Common myeloid progenitor, CD34-positive (primary cell): ENCODE measurements at regions of chr9 and their contacts with region 1.

Region 1: DNA sequence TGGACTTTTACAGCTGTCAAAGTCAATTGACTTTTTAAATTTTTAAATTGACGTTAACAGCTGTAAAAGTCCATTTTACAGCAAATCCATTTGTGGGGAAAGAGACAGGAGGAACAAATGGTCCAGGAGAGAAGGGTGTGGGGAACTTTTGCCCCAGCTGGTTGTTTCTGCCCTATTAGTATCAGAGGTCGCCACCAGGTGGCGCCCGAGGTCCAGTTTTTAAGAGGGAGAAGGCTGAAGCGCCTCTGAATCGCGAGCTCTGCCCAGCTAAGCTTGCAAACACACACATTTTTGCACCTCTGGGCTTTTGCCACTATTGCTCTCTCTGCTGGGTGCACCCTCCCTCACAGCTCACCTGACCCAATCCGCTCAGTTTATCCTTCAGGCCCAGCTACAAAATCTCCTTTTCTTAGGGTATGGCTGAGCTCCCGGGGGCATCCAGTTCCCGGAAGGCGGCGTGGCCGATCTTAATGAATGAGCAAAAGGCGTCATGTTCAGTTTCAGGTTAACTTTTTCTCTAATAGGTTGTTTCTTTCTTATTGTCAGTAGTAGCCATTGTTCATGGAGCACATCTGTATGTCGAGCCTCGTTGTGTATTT is 6.3 kb upstream of the TTLL11 start:
- DNase-seq: peak; percentile 71 to 87 (median 81)
- H3K4me3 ChIP-seq: peak overlapping the region in 2 of 7 experiments; percentile 33 to 35
- H3K27ac ChIP-seq: no peak overlapping the region
- H3K4me1 ChIP-seq: peaks cover 0 to 9% (median 4%) of the 10 kb centered on the region in 4 experiments
- H3K27me3 ChIP-seq: peaks cover 0 to 5% (median 0%) of the 10 kb centered on the region in 5 experiments

Region 2: GRCh38 chr9:121807823-121808278 is 291.5 kb before region 1 on chr9:
- CTCF ChIA-PET with region 1: no interaction called
- POLR2A ChIA-PET with region 1: no interaction called
- DNase-seq: no peak
- H3K4me3 ChIP-seq: no peak overlapping the region
- H3K27ac ChIP-seq: no peak overlapping the region
- H3K4me1 ChIP-seq: no peaks in the 10 kb centered on the region
- H3K27me3 ChIP-seq: peaks cover 0 to under 1% (median 0%) of the 10 kb centered on the region in 5 experiments

Region 3: GRCh38 chr9:122060014-122060413 is 39.4 kb before region 1 on chr9:
- CTCF ChIA-PET with region 1: no interaction called
- POLR2A ChIA-PET with region 1: no interaction called
- DNase-seq: no peak
- H3K4me3 ChIP-seq: no peak overlapping the region
- H3K27ac ChIP-seq: no peak overlapping the region
- H3K4me1 ChIP-seq: peaks cover 0 to 7% (median 6%) of the 10 kb centered on the region in 4 experiments
- H3K27me3 ChIP-seq: no peaks in the 10 kb centered on the region

Region 4: DNA sequence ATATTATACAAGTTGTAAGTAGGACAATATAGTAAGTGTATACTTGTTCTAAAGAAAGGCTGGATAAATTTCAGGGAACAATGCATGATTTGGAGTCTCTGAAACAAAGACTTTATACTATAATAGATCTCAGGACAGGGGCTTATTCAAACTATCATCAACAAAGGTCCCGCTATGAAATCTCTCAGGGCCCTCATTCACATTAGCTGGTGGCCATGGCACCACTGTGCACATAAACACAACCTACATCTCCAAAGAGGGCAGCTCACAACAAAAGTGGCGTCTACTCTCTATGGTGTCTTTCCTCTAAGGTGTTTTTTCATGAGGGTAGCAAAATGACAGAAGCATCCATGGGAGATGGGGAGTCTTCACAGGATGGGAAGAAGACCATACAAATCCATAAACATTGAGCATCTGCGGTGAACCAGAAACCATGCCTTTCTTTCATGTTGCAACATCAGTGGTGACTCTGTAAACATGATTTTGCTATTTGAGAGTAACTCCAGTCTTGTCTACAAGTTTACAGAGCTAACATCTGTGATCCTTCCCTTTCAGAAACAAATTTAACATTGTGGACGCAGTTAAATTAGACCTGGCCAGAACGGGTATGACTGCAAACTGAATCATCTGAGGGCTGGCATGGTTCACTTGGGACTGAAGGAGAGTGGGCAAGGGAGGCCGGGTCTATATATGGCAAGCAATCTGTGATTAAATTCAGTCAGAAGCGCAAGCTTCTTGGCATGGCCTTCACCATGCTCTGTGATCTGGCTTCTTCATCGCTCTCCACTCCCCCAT is 11.8 kb before region 1 on chr9:
- CTCF ChIA-PET with region 1: interaction called, 28 read pairs
- POLR2A ChIA-PET with region 1: no interaction called
- DNase-seq: no peak
- H3K4me3 ChIP-seq: no peak overlapping the region
- H3K27ac ChIP-seq: no peak overlapping the region
- H3K4me1 ChIP-seq: peaks cover 3 to 13% (median 9%) of the 10 kb centered on the region in 4 experiments
- H3K27me3 ChIP-seq: no peaks in the 10 kb centered on the region

Region 5: GRCh38 chr9:122116040-122116439 is 16.7 kb after region 1 on chr9:
- CTCF ChIA-PET with region 1: interaction called, 225 read pairs
- POLR2A ChIA-PET with region 1: no interaction called
- DNase-seq: no peak
- H3K4me3 ChIP-seq: no peak overlapping the region
- H3K27ac ChIP-seq: no peak overlapping the region
- H3K4me1 ChIP-seq: no peaks in the 10 kb centered on the region
- H3K27me3 ChIP-seq: peaks cover 0 to 3% (median 0%) of the 10 kb centered on the region in 5 experiments

Region 6: GRCh38 chr9:122144836-122145591 is 45.6 kb after region 1 on chr9:
- CTCF ChIA-PET with region 1: interaction called, 14 read pairs
- POLR2A ChIA-PET with region 1: no interaction called
- DNase-seq: peak in 2 of 3 donors; percentile 53 to 57
- H3K4me3 ChIP-seq: no peak overlapping the region
- H3K27ac ChIP-seq: no peak overlapping the region
- H3K4me1 ChIP-seq: peaks cover 0 to 17% (median 12%) of the 10 kb centered on the region in 4 experiments
- H3K27me3 ChIP-seq: no peaks in the 10 kb centered on the region

Region 7: GRCh38 chr9:122810306-122810946 is 711.1 kb after region 1 on chr9:
- CTCF ChIA-PET with region 1: interaction called, 13 read pairs
- POLR2A ChIA-PET with region 1: no interaction called
- DNase-seq: peak; percentile 79 to 91 (median 85)
- H3K4me3 ChIP-seq: no peak overlapping the region
- H3K27ac ChIP-seq: no peak overlapping the region
- H3K4me1 ChIP-seq: peaks cover 2 to 14% (median 7%) of the 10 kb centered on the region in 4 experiments
- H3K27me3 ChIP-seq: no peaks in the 10 kb centered on the region